ENCODE measurements at regions of chr19 and their contacts with region 1.

Region 1: DNA sequence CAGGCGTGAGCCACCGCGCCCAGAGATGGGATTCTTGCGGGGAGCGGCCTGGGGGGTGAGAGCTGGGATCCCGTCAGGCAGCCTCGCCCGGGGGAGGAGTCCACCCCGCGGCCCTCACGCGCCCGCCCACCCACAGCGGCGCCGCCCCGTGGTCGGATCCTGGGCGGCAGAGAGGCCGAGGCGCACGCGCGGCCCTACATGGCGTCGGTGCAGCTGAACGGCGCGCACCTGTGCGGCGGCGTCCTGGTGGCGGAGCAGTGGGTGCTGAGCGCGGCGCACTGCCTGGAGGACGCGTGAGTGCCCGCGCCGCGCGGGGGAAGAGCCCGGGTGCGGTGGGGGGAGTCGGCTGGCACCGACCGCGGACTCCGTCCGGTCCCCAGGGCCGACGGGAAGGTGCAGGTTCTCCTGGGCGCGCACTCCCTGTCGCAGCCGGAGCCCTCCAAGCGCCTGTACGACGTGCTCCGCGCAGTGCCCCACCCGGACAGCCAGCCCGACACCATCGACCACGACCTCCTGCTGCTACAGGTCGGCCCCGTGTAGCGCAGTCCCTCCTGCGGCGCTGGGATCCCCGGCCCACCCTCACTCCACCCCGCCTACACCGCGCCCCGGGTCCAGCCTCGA is 1.1 kb downstream of the CFD start:
- DNase-seq: peak; percentile 73
- ATAC-seq: peak; percentile 17
- H3K4me3 Mint-ChIP-seq: no peak overlapping the region
- H3K27ac Mint-ChIP-seq: no peak overlapping the region
- H3K4me1 Mint-ChIP-seq: peaks cover 13% of the 10 kb centered on the region
- H3K27me3 Mint-ChIP-seq: peaks cover 13% of the 10 kb centered on the region

Region 2: DNA sequence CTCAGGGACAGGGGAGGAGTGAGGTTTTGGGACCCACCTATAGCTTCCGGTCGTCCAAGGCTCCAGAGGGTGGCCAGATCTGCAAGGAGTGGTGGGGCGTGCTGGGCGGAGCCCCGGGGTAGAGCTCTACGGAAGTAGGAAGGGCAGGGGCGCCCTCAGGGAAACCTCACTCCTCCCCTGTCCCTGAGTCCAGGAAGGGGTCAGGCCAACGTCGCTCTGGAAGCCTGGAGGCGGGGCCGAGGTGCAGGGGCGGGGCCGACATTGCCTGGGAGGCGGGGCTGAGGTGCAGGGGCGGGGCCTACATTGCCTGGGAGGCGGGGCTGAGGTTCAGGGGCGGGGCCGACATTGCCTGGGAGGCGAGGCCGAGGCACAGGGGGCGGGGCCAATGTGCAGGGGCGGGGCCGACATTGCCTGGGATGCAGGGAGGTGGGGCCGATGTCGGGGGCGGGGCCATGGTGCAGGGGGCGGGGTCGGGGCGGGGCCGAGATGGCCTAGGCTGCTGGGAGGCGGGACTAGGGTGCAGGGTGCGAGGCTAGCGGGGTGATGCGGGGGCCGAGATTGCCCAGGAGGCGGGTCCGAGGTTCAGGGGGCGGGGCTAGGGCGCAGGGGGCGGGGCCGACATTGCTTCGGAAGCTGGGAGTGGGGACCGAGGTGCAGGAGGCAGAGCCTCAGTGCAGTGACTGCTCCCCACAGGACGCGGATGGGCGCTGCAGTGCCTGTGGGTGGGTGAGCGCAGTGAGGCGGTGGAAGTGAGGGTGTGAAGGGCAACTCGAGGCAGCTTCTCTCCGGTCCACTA is 156.7 kb before region 1 on chr19:
- CTCF ChIA-PET with region 1: no interaction called
- POLR2A ChIA-PET with region 1: no interaction called
- intact Hi-C with region 1: loop called in 1 of 2 experiments (anchors 1 kb)
- DNase-seq: peak; percentile 90
- ATAC-seq: peak; percentile 74
- H3K4me3 Mint-ChIP-seq: no peak overlapping the region
- H3K27ac Mint-ChIP-seq: no peak overlapping the region
- H3K4me1 Mint-ChIP-seq: peaks cover 6% of the 10 kb centered on the region
- H3K27me3 Mint-ChIP-seq: peaks cover 14% of the 10 kb centered on the region

Region 3: DNA sequence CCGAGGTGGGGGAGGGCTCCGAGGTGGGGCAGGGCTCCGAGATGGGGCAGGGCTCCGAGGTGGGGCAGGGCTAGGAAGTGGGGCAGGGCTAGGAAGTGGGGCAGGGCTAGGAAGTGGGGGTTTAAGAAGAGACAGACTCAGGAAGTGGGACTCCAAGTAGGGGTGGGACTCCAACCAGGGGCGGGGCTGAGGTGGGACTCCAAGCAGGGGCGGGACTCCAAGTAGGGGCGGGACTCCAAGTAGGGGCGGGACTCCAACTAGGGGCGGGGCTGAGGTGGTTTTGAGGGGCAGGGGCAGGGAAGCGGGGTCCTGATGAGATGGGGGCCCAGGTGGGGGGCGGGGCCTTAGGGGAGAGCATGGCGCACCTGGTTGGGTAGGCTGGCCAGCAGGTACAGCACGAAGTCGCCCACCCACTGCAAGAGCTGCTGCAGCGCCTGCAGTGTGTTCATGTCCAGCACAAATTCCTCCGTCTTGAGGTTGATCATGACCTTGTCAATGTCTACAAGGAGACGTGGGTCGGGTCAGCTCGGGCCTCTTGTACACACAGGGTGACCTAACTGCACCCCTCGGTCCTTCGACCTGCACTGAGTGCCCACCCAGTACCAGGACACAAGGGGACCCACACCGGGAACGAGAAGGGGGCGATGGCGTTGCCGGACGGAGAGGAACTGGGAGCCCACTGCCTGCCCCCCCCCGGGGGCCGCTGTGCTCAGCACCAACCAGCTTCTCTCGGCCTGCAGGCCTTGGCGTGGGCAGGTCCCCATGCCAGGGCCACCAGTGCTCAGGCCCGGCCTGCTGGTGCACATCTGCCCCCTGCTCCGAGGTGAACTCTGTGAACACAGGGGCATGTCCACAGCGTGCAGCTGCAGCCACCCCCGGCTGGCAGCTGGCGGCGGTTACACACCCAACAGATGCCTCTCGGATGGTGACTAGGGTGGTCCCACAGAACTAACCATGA is 12.8 kb after region 1 on chr19:
- CTCF ChIA-PET with region 1: no interaction called
- POLR2A ChIA-PET with region 1: interaction called, 7 read pairs
- intact Hi-C with region 1: loop called in 1 of 2 experiments (anchors 1 kb)
- DNase-seq: peak; percentile 85
- ATAC-seq: peak; percentile 89
- H3K4me3 Mint-ChIP-seq: no peak overlapping the region
- H3K27ac Mint-ChIP-seq: no peak overlapping the region
- H3K4me1 Mint-ChIP-seq: peaks cover 12% of the 10 kb centered on the region
- H3K27me3 Mint-ChIP-seq: no peaks in the 10 kb centered on the region

Region 4: GRCh38 chr19:920051-920864 is 59.7 kb after region 1 on chr19:
- CTCF ChIA-PET with region 1: interaction called, 10 read pairs
- POLR2A ChIA-PET with region 1: no interaction called
- intact Hi-C with region 1: loop called (anchors 1 kb)
- DNase-seq: peak; percentile 86
- ATAC-seq: peak; percentile 36
- H3K4me3 Mint-ChIP-seq: peak overlapping the region; percentile 80
- H3K27ac Mint-ChIP-seq: peak overlapping the region; percentile 90
- H3K4me1 Mint-ChIP-seq: peaks cover 21% of the 10 kb centered on the region
- H3K27me3 Mint-ChIP-seq: no peaks in the 10 kb centered on the region

Region 5: DNA sequence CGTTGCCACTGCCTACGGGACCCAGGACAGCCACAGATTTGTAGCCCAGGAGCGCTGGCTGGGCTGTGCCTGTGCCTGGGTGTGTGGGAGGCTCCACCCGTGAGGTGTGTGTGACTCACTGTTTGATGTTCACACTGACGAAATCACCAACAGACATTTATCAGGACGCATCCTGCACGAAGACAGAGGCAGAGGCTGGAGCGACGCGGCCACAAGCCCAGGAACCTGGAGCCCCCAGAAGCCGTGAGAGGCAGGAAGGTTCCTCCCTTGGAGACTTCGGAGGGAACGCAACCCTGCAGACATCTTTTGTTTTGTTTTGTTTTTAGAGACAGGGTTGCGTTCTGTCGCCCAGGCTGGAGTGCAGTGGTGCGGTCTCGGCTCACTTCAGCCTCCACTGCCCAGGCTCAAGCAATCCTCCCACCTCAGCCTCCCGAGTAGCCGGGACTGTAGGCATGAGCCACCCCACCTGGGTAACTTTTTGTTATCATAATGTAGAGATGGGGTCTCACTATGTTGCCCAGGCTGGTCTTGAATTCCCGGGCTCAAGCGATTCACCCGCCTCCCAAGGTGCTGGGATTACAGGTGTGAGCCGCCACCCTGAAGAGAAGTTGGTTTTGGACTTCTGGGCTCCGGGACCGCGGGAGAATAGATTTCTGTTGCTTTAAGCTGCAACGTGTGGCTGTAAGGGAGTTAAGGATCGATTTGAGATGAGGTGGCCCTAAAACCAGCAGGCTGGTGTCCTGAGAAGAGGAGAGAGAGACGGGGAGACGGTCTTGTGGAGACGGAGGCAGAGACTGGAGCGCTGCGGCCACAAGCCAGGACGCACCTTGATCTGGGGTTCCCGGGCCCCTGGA is 98.6 kb after region 1 on chr19:
- CTCF ChIA-PET with region 1: no interaction called
- POLR2A ChIA-PET with region 1: no interaction called
- intact Hi-C with region 1: no loop called
- DNase-seq: peak; percentile 77
- ATAC-seq: peak; percentile 93
- H3K4me3 Mint-ChIP-seq: peak overlapping the region; percentile 30
- H3K27ac Mint-ChIP-seq: peak overlapping the region; percentile 67
- H3K4me1 Mint-ChIP-seq: peaks cover 4% of the 10 kb centered on the region
- H3K27me3 Mint-ChIP-seq: no peaks in the 10 kb centered on the region

Region 6: DNA sequence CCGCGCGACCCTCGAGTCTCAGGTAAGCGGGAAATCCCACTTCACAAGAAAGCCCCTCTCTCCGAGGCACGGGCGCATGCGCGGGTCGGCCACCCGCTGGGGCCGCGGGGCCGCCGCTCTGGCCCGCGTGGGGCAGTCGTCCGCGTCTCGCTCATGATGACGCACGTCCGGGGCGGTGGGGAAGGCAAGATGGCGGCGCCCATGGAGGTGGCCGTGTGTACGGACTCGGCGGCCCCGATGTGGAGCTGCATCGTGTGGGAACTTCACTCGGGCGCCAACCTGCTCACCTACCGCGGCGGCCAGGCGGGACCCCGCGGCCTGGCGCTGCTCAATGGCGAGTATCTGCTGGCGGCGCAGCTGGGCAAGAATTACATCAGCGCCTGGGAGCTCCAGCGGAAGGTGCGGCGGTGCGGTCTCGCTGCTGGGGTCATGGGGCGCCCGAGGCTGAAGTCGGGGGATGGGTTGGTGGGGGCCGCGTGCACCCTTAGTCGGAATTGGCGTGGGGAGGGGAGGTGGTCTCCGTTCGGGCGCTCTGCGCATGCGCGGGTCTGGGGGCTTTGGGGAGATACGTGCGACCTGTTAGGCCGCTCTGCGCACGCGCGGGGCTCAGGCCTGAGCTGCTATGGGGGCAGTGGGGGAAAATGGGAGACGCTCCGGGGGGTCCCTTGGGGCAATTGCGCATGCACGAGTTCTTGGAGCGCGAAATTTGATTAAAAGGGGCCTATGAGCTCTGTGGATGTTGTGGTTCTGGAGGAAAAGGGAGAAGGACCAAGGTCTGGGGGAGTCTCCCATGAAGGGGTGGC is 123.8 kb after region 1 on chr19 and contains the start of gene WDR18:
- CTCF ChIA-PET with region 1: interaction called, 21 read pairs
- POLR2A ChIA-PET with region 1: interaction called, 6 read pairs
- intact Hi-C with region 1: loop called (anchors 1 to 2 kb)
- DNase-seq: peak; percentile 95
- ATAC-seq: peak; percentile 92
- H3K4me3 Mint-ChIP-seq: peak within 1 kb of the TSS; percentile 91
- H3K27ac Mint-ChIP-seq: peak within 1 kb of the TSS; percentile 86
- H3K4me1 Mint-ChIP-seq: peaks cover 14% of the 10 kb centered on the region
- H3K27me3 Mint-ChIP-seq: no peaks in the 10 kb centered on the region
- total RNA-seq, gene WDR18: 71.6 to 87.8 TPM

Region 7: GRCh38 chr19:1001538-1002166 is 141.1 kb after region 1 on chr19:
- CTCF ChIA-PET with region 1: interaction called, 8 read pairs
- POLR2A ChIA-PET with region 1: no interaction called
- intact Hi-C with region 1: loop called in 1 of 2 experiments (anchors 1 kb)
- DNase-seq: peak; percentile 84
- ATAC-seq: peak; percentile 77
- H3K4me3 Mint-ChIP-seq: no peak overlapping the region
- H3K27ac Mint-ChIP-seq: no peak overlapping the region
- H3K4me1 Mint-ChIP-seq: peaks cover 5% of the 10 kb centered on the region
- H3K27me3 Mint-ChIP-seq: peaks cover 19% of the 10 kb centered on the region

Region 8: DNA sequence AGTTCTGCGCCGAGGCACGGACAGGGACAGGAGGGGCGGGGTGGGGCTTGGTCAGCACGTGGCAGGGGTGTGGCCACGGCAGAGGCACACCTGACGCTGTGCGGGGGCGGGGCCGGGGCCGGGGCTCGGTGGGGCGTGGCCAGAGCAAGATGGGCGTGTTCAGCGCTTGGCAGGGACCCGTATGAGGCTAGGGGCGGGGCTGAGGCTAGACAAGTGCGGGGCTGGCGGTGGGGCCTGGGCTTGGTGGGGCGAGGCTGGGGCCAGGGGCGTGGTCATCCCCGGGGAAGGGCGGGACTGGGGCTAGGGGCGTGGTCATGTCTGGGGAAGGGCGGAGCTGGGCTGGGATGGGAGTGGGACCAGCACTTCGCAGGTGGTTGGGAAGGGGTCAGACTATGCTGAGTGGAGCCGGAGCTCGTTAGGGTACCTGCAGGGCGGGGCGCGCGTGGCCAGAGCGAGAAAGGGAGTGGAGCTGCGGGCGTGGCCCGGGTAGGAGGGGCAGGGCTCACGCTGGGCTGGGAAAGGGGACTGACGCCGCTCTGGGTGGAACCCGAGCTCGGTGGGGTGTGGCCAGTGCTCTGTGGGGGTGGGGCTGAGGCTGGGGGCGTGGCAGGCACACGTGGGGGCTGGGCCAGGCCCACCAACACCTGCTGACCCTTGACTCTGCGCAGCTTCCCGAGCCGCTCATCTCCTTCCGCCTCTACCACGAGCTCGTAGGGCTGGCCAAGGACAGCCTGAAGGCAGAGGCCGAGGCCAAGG is 221.8 kb after region 1 on chr19:
- CTCF ChIA-PET with region 1: interaction called, 3 read pairs
- POLR2A ChIA-PET with region 1: no interaction called
- intact Hi-C with region 1: loop called in 1 of 2 experiments (anchors 1 kb)
- DNase-seq: peak; percentile 96
- ATAC-seq: peak; percentile 71
- H3K4me3 Mint-ChIP-seq: no peak overlapping the region
- H3K27ac Mint-ChIP-seq: no peak overlapping the region
- H3K4me1 Mint-ChIP-seq: peaks cover 60% of the 10 kb centered on the region
- H3K27me3 Mint-ChIP-seq: no peaks in the 10 kb centered on the region